ENCODE measurements at regions of chr7 and their contacts with region 1.

Region 1: GRCh38 chr7:49776994-49777393 is 3.6 kb downstream of the VWC2 start:
- DNase-seq: no peak
- ATAC-seq: peak; percentile 7

Region 2: GRCh38 chr7:49643321-49643720 is 133.7 kb before region 1 on chr7:
- intact Hi-C with region 1: loop called (anchors 10 kb)
- DNase-seq: peak; percentile 68
- ATAC-seq: peak; percentile 97

Region 3: DNA sequence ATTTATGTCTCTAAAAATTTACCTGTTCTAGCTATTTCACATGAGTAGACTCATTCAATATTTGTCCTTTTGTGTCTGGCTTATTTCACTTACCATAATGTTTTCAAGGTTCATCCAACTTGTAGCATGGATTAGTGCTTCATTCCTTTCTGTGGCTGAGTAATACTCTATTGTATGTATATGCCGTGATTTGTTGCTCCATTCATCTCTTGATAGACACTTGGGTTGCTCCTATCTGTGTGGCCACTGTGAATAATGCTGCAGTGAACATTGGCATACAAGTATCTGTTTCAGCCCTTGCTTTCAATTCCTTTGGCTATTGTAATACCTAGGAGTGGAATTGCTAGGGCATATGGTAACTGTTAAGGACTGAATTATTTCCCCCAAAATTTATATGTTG is 83.3 kb after region 1 on chr7:
- intact Hi-C with region 1: no loop called
- DNase-seq: no peak
- ATAC-seq: no peak